Gastrocnemius medialis (tissue), 4 donors: ENCODE measurements at regions of chr18 and their contacts with region 1.

Region 1: DNA sequence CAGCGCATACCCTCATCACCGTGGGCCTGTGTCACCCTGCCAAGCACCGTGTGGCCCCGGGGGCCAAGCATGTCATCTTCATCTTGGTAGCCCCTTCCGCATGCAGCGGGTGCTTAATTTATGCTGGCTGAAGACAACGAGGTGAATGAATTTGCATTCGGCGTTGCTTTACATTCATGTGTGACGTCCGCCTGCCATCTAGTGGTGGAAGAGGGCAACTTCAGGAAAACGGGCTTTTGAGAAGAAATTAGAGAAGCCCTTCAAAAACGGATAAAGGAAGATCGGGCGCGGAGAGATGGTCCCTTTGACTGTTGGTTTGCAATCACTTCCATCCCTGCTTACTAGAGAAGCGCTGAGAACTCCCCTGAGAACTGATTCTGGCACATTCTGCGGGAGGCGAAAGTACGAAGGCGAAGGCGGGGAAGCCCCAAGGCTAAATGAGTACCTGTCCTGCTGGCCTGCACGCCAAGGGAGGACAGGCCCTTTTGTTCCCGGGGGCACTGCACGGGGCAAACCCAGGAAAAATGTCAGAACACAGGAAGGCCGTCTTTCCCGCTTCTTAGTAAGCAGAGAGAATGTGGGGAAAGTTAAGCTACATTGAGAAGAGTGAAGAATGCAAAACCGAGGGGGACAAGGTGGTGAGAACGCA is 145.9 kb downstream of the ZNF516 start:
- DNase-seq: peak; percentile 17 to 43
- ATAC-seq: peak; percentile 43 to 63
- H3K4me3 ChIP-seq: peak overlapping the region in 2 of 4 donors; percentile 9 to 14
- H3K27ac ChIP-seq: no peak overlapping the region
- H3K4me1 ChIP-seq: peaks cover 4 to 5% of the 10 kb centered on the region in 2 donors
- H3K27me3 ChIP-seq: no peaks in the 10 kb centered on the region
- CTCF ChIP-seq: peak; percentile 56 to 87 (median 82)
- POLR2A ChIP-seq: no peak

Region 2: GRCh38 chr18:74623047-74623816 is 1726.0 kb before region 1 on chr18:
- in situ Hi-C with region 1: no loop called
- intact Hi-C with region 1: loop called (anchors 5 kb)
- DNase-seq: no peak
- ATAC-seq: no peak
- H3K4me3 ChIP-seq: no peak overlapping the region
- H3K27ac ChIP-seq: no peak overlapping the region
- H3K4me1 ChIP-seq: no peaks in the 10 kb centered on the region
- H3K27me3 ChIP-seq: no peaks in the 10 kb centered on the region
- CTCF ChIP-seq: peak in 4 of 5 experiments; percentile 12 to 49 (median 26)
- POLR2A ChIP-seq: no peak

Region 3: DNA sequence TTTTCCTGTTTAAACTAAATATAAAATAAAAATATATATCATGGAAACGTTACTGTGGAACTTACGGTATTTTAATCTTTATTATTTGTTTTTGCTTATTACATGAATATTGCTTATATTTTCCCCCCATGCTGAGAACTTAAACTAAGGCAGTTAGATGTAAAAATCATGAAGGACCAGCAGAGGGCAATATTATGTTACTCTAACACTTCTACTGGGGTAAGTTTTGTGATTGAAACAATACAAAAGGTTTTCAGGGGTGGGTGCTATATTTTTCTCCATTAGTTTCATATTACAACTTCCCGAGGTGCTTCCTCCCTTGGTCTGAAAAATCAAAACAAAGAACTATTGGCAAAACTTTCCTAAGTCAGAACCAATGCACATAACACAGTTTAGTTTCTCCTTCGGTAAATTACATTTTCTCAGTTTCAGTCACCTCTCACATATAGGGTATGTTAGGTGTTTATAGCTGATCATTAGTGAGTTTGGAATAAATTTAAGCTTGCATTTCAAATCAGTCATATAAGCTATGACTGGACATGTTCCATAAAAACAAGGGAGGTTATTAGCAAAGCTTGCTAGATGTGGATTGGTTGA is 1696.7 kb before region 1 on chr18:
- in situ Hi-C with region 1: no loop called
- intact Hi-C with region 1: loop called (anchors 10 kb)
- DNase-seq: no peak
- ATAC-seq: peak in 1 of 2 donors; percentile 55
- H3K4me3 ChIP-seq: no peak overlapping the region
- H3K27ac ChIP-seq: no peak overlapping the region
- H3K4me1 ChIP-seq: no peaks in the 10 kb centered on the region
- H3K27me3 ChIP-seq: no peaks in the 10 kb centered on the region
- CTCF ChIP-seq: peak; percentile 23 to 53 (median 42)
- POLR2A ChIP-seq: no peak

Region 4: GRCh38 chr18:75489493-75490190 is 859.5 kb before region 1 on chr18:
- in situ Hi-C with region 1: loop called in 1 of 4 experiments (anchors 10 kb)
- intact Hi-C with region 1: no loop called
- DNase-seq: no peak
- ATAC-seq: no peak
- H3K4me3 ChIP-seq: no peak overlapping the region
- H3K27ac ChIP-seq: no peak overlapping the region
- H3K4me1 ChIP-seq: no peaks in the 10 kb centered on the region
- H3K27me3 ChIP-seq: no peaks in the 10 kb centered on the region
- CTCF ChIP-seq: no peak
- POLR2A ChIP-seq: no peak

Region 5: GRCh38 chr18:75937306-75937705 is 411.9 kb before region 1 on chr18:
- in situ Hi-C with region 1: no loop called
- intact Hi-C with region 1: no loop called
- DNase-seq: no peak
- ATAC-seq: no peak
- H3K4me3 ChIP-seq: no peak overlapping the region
- H3K27ac ChIP-seq: no peak overlapping the region
- H3K4me1 ChIP-seq: no peaks in the 10 kb centered on the region
- H3K27me3 ChIP-seq: no peaks in the 10 kb centered on the region
- CTCF ChIP-seq: no peak
- POLR2A ChIP-seq: no peak